ENCODE measurements at regions of chr19 and their contacts with region 1.

Region 1: DNA sequence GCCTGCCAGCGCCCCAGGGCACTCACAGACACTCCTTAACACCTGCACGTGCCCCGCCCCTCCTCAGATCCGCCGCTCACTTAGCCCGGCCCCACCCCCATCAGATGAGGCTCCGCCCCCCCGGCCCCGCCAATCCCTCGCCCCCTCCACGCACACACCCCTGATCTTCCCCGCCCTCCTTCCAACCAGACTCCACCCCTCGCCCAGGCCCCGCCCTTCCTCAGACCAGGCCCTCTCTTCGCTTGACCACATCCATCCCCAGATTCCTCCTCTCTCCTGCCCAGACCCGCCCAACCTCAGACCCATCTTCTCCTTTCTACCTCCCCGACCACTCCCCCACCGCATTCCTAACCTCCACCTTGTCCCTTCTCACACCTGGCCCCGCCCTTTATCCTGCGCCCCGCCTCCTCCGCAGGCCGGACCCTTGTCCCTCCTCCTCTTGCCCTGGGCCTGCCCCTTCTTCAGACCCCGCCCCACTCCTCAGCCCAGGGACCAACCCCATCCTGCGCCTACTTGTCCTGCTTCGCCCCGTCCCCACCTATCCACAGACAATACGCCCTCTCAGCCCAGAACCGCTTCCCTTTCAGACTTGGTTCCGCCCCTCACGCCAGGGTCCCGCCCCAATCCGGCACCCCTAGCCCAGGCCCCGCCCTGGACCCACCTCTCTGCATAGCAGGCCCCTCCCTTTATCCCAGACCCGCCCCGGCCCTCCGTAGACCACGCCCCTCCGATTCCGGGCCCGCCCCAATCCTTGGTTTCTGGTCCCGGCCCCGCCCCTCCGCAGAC is 452 bp upstream of the KLHL26 start:
- DNase-seq: peak; percentile 97 to 100 (median 98)
- ATAC-seq: peak; percentile 95
- H3K4me3 ChIP-seq: peak overlapping the region; percentile 77
- H3K4me3 Mint-ChIP-seq: peak overlapping the region; percentile 71 to 100 (median 88)
- H3K27ac ChIP-seq: peak overlapping the region; percentile 88
- H3K27ac Mint-ChIP-seq: peak overlapping the region; percentile 70 to 96 (median 87)
- H3K4me1 ChIP-seq: peaks cover 6 to 19% of the 10 kb centered on the region in 2 donors
- H3K4me1 Mint-ChIP-seq: peaks cover 23 to 48% (median 36%) of the 10 kb centered on the region in 7 donors
- H3K27me3 ChIP-seq: no peaks in the 10 kb centered on the region
- H3K27me3 Mint-ChIP-seq: peaks cover 0 to 18% (median 3%) of the 10 kb centered on the region in 5 donors

Region 2: GRCh38 chr19:18557474-18558201 is 78.7 kb before region 1 on chr19 and contains the start of gene KXD1:
- CTCF ChIA-PET with region 1: no interaction called
- POLR2A ChIA-PET with region 1: no interaction called
- intact Hi-C with region 1: loop called (anchors 1 kb)
- DNase-seq: peak; percentile 89 to 99 (median 97)
- ATAC-seq: peak; percentile 100
- H3K4me3 ChIP-seq: peak within 1 kb of the TSS; percentile 84
- H3K4me3 Mint-ChIP-seq: peak within 1 kb of the TSS; percentile 83 to 93 (median 91)
- H3K27ac ChIP-seq: peak within 1 kb of the TSS; percentile 95
- H3K27ac Mint-ChIP-seq: peak within 1 kb of the TSS; percentile 87 to 97 (median 96)
- H3K4me1 ChIP-seq: peaks cover 13 to 15% of the 10 kb centered on the region in 2 donors
- H3K4me1 Mint-ChIP-seq: peaks cover 6 to 25% (median 23%) of the 10 kb centered on the region in 7 donors
- H3K27me3 ChIP-seq: no peaks in the 10 kb centered on the region
- H3K27me3 Mint-ChIP-seq: no peaks in the 10 kb centered on the region
- total RNA-seq, gene KXD1: 74.7 to 108 (median 99.9) TPM

Region 3: DNA sequence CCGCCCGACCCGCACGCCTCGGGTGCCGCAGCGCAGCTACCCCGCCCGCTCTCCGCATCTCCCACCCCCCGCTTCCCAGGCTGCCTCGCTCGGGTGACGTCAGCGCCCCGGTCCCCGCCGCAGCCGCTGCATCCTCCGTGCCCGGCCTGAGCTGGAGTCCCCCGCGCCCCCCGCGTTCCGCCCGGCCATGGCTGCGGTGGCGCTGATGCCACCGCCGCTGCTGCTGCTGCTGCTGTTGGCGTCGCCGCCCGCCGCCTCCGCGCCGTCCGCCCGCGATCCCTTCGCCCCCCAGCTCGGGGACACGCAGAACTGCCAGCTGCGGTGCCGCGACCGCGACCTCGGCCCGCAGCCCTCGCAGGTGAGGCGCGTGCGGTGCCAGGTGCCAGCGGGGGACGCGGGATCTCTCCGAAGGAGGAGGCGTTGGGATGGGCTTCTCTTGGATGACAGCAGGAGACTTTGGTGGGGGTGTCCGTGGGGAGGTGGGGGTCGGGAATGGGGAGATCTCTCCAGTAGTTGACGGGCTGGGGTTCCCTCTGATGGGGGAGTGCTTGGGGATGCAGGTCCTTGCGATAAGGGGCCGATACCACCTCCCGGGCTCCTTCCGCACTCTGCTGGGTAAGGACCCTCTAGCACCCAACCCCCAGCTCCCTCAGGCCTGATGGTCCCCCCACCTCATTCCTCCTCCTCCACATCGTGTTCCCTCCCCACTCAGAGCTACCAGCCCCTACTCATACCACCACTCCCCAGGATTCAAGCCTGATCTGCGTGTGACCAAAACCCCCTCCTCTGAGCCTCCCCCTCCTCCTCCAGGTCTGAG is 23.4 kb before region 1 on chr19 and contains the start of gene TMEM59L:
- CTCF ChIA-PET with region 1: no interaction called
- POLR2A ChIA-PET with region 1: no interaction called
- intact Hi-C with region 1: loop called in 1 of 2 experiments (anchors 1 kb)
- DNase-seq: peak in 8 of 9 donors; percentile 36 to 68 (median 51)
- ATAC-seq: peak; percentile 73
- H3K4me3 ChIP-seq: peak within 1 kb of the TSS; percentile 61
- H3K4me3 Mint-ChIP-seq: peak within 1 kb of the TSS; percentile 71 to 87 (median 79)
- H3K27ac ChIP-seq: no peak within 1 kb of the TSS
- H3K27ac Mint-ChIP-seq: peak within 1 kb of the TSS in 3 of 9 donors; percentile 55 to 77 (median 62)
- H3K4me1 ChIP-seq: peaks cover 12% of the 10 kb centered on the region in 2 donors
- H3K4me1 Mint-ChIP-seq: peaks cover 6 to 28% (median 18%) of the 10 kb centered on the region in 7 donors
- H3K27me3 ChIP-seq: peaks cover 11 to 26% of the 10 kb centered on the region in 2 donors
- H3K27me3 Mint-ChIP-seq: peaks cover 49 to 75% (median 70%) of the 10 kb centered on the region in 5 donors
- total RNA-seq, gene TMEM59L: 0.22 to 0.24 TPM in 2 of 5 experiments, not detected in the others

Region 4: DNA sequence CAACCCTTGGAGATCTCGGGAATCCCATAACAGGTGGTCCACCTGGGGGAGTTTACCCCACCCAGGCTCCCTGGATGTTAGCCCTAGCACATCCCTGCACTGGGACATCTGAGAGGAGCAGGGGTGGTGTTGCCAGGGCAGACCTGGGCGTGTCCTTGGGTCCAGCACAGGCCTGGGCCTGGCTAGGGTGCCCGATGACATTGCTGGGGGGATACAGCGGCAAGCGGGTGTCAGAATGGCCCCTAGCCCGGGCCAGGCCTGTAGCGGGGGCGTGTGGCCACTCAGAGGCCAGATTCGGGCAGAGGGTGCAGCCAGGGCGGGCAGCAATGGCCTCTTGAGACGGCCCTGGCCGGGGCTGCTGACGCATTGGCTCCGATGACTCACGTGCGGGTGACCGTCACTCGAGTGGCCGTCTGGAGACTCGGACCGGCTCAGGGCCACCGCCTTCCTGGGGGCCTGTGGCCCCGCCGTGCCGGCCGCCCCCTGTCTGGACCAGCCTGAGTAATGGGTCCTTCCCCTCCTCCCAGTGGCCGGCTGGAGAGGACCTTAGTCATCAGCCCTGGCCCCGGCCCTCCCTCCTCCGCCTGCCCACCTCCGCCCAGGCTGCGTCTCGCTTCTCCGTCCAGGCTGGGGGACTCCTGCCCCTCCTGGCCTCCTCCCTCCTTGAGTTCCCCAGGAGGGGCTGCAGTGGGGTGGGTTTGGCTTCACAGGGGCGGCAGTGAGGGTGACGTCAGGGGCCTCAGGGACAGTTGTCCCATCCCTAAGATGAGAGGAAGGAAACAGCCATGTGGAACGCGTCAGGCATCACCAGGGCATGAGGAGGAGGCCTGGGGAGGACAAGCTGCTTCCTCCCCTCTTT is 23.9 kb after region 1 on chr19:
- CTCF ChIA-PET with region 1: no interaction called
- POLR2A ChIA-PET with region 1: no interaction called
- intact Hi-C with region 1: no loop called
- DNase-seq: no peak
- ATAC-seq: no peak
- H3K4me3 ChIP-seq: no peak overlapping the region
- H3K4me3 Mint-ChIP-seq: no peak overlapping the region
- H3K27ac ChIP-seq: no peak overlapping the region
- H3K27ac Mint-ChIP-seq: peak overlapping the region in 1 of 9 donors; percentile 65
- H3K4me1 ChIP-seq: peaks cover 0 to 9% of the 10 kb centered on the region in 2 donors
- H3K4me1 Mint-ChIP-seq: peaks cover 9 to 43% (median 34%) of the 10 kb centered on the region in 7 donors
- H3K27me3 ChIP-seq: no peaks in the 10 kb centered on the region
- H3K27me3 Mint-ChIP-seq: no peaks in the 10 kb centered on the region

Region 5: DNA sequence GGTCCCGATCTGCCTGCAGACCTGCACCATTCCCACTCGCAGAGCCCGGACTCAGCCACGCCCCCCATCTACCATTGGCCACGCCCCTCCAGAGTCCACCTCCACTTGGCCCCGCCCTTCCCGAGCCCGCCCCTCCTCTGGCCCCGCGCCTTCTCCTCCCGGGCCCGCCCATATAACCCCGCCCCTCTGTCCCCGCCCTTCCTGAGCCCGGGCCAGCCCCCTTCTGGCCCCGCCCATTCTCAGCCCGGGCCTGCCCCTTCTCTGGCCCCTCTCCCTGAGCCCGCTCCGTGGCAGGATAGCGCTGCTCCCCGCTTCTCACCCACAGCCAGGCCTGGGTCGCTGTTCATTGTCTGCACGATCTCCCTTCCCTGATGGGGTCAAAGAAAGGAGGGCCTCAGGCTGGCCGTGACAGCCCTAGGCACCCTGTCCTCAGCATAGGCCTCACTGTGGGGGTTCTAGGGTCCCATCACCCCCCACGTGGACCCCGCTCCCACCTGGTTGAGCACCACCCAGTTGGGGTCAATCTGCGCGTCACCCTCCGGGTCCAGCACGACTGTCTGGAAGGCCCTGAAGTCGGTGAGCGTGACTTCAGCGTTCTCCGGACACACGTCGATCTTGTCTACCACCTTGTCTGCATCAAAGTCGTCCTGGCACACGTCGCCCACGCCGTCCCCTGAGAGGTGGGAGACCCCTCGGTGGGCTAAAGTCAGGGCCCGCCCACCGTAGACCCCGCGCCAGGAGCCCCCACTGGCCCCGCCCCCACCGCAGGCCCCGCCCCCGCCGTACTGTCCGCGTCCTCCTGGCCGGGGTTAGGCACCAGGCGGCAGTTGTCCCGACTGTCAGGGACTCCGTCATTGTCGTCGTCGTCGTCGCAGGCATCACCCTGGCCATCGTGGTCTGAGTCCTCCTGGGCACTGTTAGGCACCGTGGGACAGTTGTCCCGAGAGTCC is 149.1 kb after region 1 on chr19:
- CTCF ChIA-PET with region 1: interaction called, 3 read pairs
- POLR2A ChIA-PET with region 1: no interaction called
- intact Hi-C with region 1: loop called in 1 of 2 experiments (anchors 1 kb)
- DNase-seq: peak; percentile 19 to 71 (median 45)
- ATAC-seq: peak; percentile 85
- H3K4me3 ChIP-seq: no peak overlapping the region
- H3K4me3 Mint-ChIP-seq: peak overlapping the region; percentile 12 to 69 (median 51)
- H3K27ac ChIP-seq: no peak overlapping the region
- H3K27ac Mint-ChIP-seq: peak overlapping the region in 1 of 9 donors; percentile 48
- H3K4me1 ChIP-seq: peaks cover 11 to 13% of the 10 kb centered on the region in 2 donors
- H3K4me1 Mint-ChIP-seq: peaks cover 21 to 49% (median 37%) of the 10 kb centered on the region in 7 donors
- H3K27me3 ChIP-seq: peaks cover 4 to 16% of the 10 kb centered on the region in 2 donors
- H3K27me3 Mint-ChIP-seq: peaks cover 37 to 54% (median 44%) of the 10 kb centered on the region in 5 donors

Region 6: GRCh38 chr19:19033426-19034203 is 397.2 kb after region 1 on chr19 and contains the starts of genes ARMC6 and SUGP2:
- CTCF ChIA-PET with region 1: no interaction called
- POLR2A ChIA-PET with region 1: no interaction called
- intact Hi-C with region 1: loop called (anchors 1 kb)
- DNase-seq: peak; percentile 84 to 96 (median 94)
- ATAC-seq: peak; percentile 87
- H3K4me3 ChIP-seq: peak within 1 kb of the TSS; percentile 84
- H3K4me3 Mint-ChIP-seq: peak within 1 kb of the TSS; percentile 88 to 100 (median 96)
- H3K27ac ChIP-seq: peak within 1 kb of the TSS; percentile 86
- H3K27ac Mint-ChIP-seq: peak within 1 kb of the TSS; percentile 86 to 100 (median 94)
- H3K4me1 ChIP-seq: peaks cover 14 to 16% of the 10 kb centered on the region in 2 donors
- H3K4me1 Mint-ChIP-seq: peaks cover 16 to 40% (median 36%) of the 10 kb centered on the region in 7 donors
- H3K27me3 ChIP-seq: no peaks in the 10 kb centered on the region
- H3K27me3 Mint-ChIP-seq: no peaks in the 10 kb centered on the region
- total RNA-seq, gene ARMC6: 14.0 to 32.6 (median 15.0) TPM
- total RNA-seq, gene SUGP2: 116 to 145 (median 129) TPM

Measured in naive thymus-derived CD4-positive, alpha-beta T cell (primary cell).